MCF 10A (cell line): ENCODE measurements at regions of chr18 and their contacts with region 1.

Region 1: DNA sequence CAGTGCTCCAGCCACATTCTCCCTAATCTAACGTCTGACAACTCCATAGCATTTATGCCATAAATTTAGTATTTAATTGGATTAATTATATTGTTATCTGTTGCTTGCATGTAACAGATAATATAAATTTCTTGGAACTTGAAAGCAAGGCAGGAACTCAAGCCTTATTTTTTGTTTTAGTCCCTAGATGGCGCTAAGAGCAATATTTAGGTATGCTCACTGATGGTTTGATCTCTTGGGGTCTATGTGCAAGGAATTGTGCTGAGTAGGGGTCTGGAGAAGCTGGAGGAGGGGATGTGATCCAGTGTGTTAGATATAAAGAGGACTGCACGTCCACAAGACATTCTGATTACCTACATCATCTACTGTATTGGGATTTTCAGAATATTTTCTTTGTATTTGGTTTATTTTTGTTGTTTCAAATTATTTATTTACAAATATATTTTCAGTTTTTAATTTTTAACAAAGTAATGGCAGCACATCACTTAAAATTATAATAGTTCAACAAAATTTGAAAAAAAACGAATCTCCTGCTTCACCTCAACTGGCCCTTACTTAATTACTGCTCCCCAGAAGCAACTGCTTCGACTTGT is 32.8 kb downstream of the KATNAL2 start:
- DNase-seq: peak; percentile 13
- H3K4me3 Mint-ChIP-seq: no peak overlapping the region
- H3K27ac Mint-ChIP-seq: no peak overlapping the region
- H3K4me1 Mint-ChIP-seq: peaks cover 6% of the 10 kb centered on the region
- H3K27me3 Mint-ChIP-seq: no peaks in the 10 kb centered on the region
- CTCF ChIP-seq: peak; percentile 44

Region 2: DNA sequence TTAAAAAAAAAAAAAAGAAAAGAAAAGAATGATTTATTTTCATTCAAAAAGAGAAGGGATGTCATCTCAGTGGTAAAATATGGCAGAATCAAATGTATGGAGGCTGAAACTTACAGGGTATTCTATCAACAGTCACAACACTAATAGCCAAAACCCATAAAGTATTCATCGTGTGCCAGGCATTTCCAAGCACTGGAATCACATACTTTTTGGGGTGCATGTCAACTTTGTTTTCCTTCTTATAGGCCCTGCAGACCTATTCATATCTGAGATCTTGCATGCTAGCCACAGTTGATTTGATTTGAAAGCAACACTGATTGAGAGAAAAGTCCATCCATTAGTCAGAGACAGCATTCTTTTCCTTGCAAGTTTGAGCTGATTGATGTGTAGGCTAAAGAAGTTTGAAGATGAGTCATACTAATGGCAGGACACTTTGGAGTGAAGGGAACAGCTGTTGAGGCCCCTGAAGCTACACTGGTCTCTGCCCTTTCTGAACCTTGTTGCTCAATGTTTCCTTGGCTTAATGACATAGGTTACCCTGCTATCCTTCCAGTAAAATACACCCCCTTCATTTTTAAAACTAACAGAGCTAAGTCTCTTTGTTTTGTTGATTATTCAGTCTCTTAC is 10.7 kb before region 1 on chr18:
- CTCF ChIA-PET with region 1: interaction called, 11 read pairs
- POLR2A ChIA-PET with region 1: no interaction called
- intact Hi-C with region 1: no loop called
- DNase-seq: peak; percentile 81
- H3K4me3 Mint-ChIP-seq: no peak overlapping the region
- H3K27ac Mint-ChIP-seq: peak overlapping the region; percentile 5
- H3K4me1 Mint-ChIP-seq: peaks cover 11% of the 10 kb centered on the region
- H3K27me3 Mint-ChIP-seq: no peaks in the 10 kb centered on the region
- CTCF ChIP-seq: no peak

Region 3: GRCh38 chr18:47345291-47345690 is 395.1 kb after region 1 on chr18:
- CTCF ChIA-PET with region 1: no interaction called
- POLR2A ChIA-PET with region 1: no interaction called
- intact Hi-C with region 1: no loop called
- DNase-seq: no peak
- H3K4me3 Mint-ChIP-seq: no peak overlapping the region
- H3K27ac Mint-ChIP-seq: no peak overlapping the region
- H3K4me1 Mint-ChIP-seq: no peaks in the 10 kb centered on the region
- H3K27me3 Mint-ChIP-seq: no peaks in the 10 kb centered on the region
- CTCF ChIP-seq: no peak